CD8-positive, alpha-beta T cell (primary cell): ENCODE measurements at regions of chr4 and their contacts with region 1.

Region 1: GRCh38 chr4:109559983-109560686 is at the start of gene MCUB:
- DNase-seq: peak; percentile 81 to 96 (median 90)
- ATAC-seq: peak; percentile 87
- H3K4me3 ChIP-seq: peak within 1 kb of the TSS; percentile 96
- H3K4me3 Mint-ChIP-seq: peak within 1 kb of the TSS; percentile 97
- H3K27ac ChIP-seq: peak within 1 kb of the TSS; percentile 91 to 92
- H3K27ac Mint-ChIP-seq: peak within 1 kb of the TSS; percentile 97
- H3K4me1 ChIP-seq: peaks cover 50% of the 10 kb centered on the region
- H3K4me1 Mint-ChIP-seq: peaks cover 58% of the 10 kb centered on the region
- H3K27me3 ChIP-seq: no peaks in the 10 kb centered on the region
- H3K27me3 Mint-ChIP-seq: no peaks in the 10 kb centered on the region
- CTCF ChIP-seq: no peak
- total RNA-seq, gene MCUB: 84.3 to 91.9 TPM

Region 2: GRCh38 chr4:109574102-109574850 is 14.1 kb after region 1 on chr4:
- CTCF ChIA-PET with region 1: interaction called, 4 read pairs
- POLR2A ChIA-PET with region 1: interaction called, 14 read pairs
- intact Hi-C with region 1: loop called in 1 of 2 experiments (anchors 1 kb)
- DNase-seq: peak in 2 of 9 experiments; percentile 36 to 52
- ATAC-seq: peak; percentile 64
- H3K4me3 ChIP-seq: no peak overlapping the region
- H3K4me3 Mint-ChIP-seq: peak overlapping the region; percentile 37
- H3K27ac ChIP-seq: no peak overlapping the region
- H3K27ac Mint-ChIP-seq: peak overlapping the region; percentile 67
- H3K4me1 ChIP-seq: peaks cover 45% of the 10 kb centered on the region
- H3K4me1 Mint-ChIP-seq: peaks cover 74% of the 10 kb centered on the region
- H3K27me3 ChIP-seq: no peaks in the 10 kb centered on the region
- H3K27me3 Mint-ChIP-seq: no peaks in the 10 kb centered on the region
- CTCF ChIP-seq: peak; percentile 18

Region 3: GRCh38 chr4:109608879-109609278 is 48.7 kb after region 1 on chr4:
- CTCF ChIA-PET with region 1: no interaction called
- POLR2A ChIA-PET with region 1: interaction called, 7 read pairs
- intact Hi-C with region 1: loop called in 1 of 2 experiments (anchors 5 kb)
- DNase-seq: no peak
- ATAC-seq: no peak
- H3K4me3 ChIP-seq: no peak overlapping the region
- H3K4me3 Mint-ChIP-seq: peak overlapping the region; percentile 35
- H3K27ac ChIP-seq: no peak overlapping the region
- H3K27ac Mint-ChIP-seq: peak overlapping the region; percentile 60
- H3K4me1 ChIP-seq: peaks cover 29% of the 10 kb centered on the region
- H3K4me1 Mint-ChIP-seq: peaks cover 80% of the 10 kb centered on the region
- H3K27me3 ChIP-seq: no peaks in the 10 kb centered on the region
- H3K27me3 Mint-ChIP-seq: no peaks in the 10 kb centered on the region
- CTCF ChIP-seq: no peak

Region 4: DNA sequence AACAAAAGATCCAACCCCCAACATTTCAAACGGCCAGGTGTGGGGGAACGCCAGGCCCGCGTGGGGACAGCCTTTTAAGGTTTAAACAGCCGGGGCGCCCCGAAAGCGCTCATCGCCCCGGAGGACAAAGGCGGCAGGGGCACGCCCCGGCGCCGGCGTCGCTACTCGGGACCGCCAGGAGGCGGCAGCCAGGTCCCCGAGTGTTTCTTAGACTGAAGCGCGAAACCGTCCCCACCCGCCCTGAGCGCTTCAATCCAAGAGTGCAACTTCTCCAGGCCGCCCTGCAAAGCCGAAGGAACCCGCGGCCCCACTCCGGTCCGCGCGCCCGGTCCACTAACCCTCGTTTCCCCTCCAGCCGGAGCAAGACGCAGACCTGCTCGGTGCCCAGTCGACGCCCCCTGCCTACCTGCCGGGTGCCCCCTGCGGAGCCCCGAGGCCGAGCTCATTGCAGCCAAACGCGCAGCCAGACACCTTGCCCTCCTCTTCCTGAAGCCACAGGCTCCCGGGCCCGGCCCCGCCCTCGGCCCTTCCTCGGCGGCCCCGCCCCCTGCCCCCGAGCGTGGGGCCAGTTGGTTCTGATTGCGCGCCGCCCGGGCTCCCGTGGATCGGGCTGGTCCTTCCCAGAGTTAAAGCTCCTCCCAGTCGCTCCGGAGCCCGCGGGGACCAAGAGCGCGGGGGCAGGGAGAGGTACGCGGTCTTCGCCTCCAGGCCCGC is 143.0 kb after region 1 on chr4 and contains the start of gene CASP6:
- CTCF ChIA-PET with region 1: interaction called, 4 read pairs
- POLR2A ChIA-PET with region 1: interaction called, 9 read pairs
- intact Hi-C with region 1: loop called in 1 of 2 experiments (anchors 1 kb)
- DNase-seq: peak; percentile 52 to 87 (median 77)
- ATAC-seq: peak; percentile 89
- H3K4me3 ChIP-seq: peak within 1 kb of the TSS; percentile 72 to 85
- H3K4me3 Mint-ChIP-seq: peak within 1 kb of the TSS; percentile 94
- H3K27ac ChIP-seq: peak within 1 kb of the TSS; percentile 48 to 66
- H3K27ac Mint-ChIP-seq: peak within 1 kb of the TSS; percentile 94
- H3K4me1 ChIP-seq: peaks cover 15% of the 10 kb centered on the region
- H3K4me1 Mint-ChIP-seq: peaks cover 38% of the 10 kb centered on the region
- H3K27me3 ChIP-seq: no peaks in the 10 kb centered on the region
- H3K27me3 Mint-ChIP-seq: no peaks in the 10 kb centered on the region
- CTCF ChIP-seq: peak; percentile 67
- total RNA-seq, gene CASP6: 3.4 to 6.7 TPM

Region 5: DNA sequence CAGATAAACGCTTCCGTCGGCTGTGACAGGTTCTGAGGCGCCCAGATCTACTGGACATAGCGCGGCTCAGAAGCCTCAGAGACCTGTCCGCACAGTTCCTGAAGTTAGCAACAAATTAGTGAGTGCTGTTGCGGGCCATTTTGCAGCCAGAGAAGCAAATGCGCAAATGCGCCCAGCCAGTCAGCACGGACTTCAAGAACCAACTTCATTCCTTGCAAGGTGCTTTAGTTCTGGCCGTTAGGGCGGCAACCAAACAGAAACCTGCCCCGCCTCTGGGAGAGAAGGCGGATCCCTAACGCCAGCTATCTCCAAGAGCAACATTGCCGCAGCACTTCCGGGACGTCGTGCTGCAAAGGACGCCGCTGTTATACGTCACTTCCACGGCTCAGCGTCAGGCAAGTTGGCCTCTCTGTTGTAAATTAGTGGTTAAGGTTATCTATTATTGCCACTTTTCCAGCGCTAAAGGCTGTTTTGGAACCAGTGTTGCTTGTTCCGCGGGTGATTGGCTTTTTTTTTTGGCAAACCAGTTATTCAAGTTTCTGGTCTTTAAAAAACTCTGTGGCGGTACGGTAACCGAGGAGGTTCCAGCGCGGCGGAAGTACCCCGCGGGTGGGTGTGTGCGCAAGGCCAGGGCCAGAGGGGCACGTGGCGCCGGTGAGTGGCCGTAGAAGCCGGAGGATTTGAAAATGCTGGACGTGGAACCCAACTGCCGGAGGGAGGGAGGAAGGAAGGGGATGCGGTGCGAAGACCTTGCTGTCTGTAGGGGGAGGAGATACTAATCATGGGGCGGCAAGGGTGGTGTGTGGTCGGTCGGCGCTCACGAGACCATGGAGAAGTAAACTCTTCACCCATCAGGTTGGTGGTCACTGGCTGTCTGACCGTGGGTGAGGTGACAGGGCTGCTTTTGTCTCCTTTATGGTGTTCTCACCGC is 255.3 kb after region 1 on chr4 and contains the start of gene GAR1:
- CTCF ChIA-PET with region 1: no interaction called
- POLR2A ChIA-PET with region 1: no interaction called
- intact Hi-C with region 1: loop called (anchors 1 to 2 kb)
- DNase-seq: peak; percentile 67 to 95 (median 86)
- ATAC-seq: peak; percentile 92
- H3K4me3 ChIP-seq: peak within 1 kb of the TSS; percentile 85 to 87
- H3K4me3 Mint-ChIP-seq: peak within 1 kb of the TSS; percentile 99
- H3K27ac ChIP-seq: peak within 1 kb of the TSS; percentile 96 to 97
- H3K27ac Mint-ChIP-seq: peak within 1 kb of the TSS; percentile 99
- H3K4me1 ChIP-seq: peaks cover 16% of the 10 kb centered on the region
- H3K4me1 Mint-ChIP-seq: peaks cover 43% of the 10 kb centered on the region
- H3K27me3 ChIP-seq: no peaks in the 10 kb centered on the region
- H3K27me3 Mint-ChIP-seq: no peaks in the 10 kb centered on the region
- CTCF ChIP-seq: no peak
- total RNA-seq, gene GAR1: 11.8 to 15.4 TPM